ENCODE measurements at regions of chrX and their contacts with region 1.

Region 1: DNA sequence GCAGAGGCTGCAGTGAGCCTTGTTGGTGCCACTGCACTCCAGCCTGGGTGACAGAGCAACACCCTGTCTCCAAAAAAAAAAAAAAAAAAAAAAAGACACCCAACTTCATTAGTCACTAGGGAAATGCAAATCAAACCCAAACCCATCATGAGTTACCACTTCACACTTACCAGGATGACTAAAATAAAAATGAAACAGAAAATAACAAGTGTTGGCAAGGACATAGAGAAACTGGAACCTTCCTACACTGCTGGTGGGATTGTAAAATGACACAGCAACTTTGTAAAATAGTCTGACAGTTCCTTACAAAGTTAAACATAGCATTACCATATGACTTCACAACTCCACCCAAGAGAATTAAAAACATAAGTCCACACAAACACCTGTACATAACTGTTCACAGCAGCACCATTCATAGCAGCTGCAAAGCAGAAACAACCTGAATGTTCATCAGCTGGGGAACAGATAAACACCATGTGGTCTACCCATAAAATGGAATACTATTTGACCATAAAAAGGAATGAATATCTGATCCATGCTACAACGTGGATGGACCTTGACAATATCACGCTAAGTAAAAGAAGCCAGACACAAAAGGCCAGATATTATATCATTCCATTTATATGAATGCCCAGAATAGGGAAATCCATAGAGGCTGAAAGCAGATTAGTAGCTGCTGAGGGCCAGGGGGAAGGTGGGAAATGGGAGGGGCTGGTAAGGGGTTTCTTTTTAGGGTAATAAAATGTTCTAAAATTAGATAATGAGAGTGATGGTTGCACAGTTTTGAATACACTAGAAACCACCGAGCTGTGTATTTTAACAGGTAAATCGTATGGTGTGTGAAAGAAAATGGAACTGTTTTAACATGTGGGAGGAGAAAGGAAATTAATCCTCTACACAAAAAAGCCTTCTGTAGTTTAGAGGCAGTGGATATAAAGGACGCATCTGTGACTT is 18.3 kb downstream of the CD99L2 start:
- DNase-seq: no peak
- H3K4me3 ChIP-seq: no peak overlapping the region
- H3K27ac ChIP-seq: no peak overlapping the region
- H3K4me1 ChIP-seq: no peaks in the 10 kb centered on the region
- H3K27me3 ChIP-seq: no peaks in the 10 kb centered on the region
- CTCF ChIP-seq: no peak

Region 2: DNA sequence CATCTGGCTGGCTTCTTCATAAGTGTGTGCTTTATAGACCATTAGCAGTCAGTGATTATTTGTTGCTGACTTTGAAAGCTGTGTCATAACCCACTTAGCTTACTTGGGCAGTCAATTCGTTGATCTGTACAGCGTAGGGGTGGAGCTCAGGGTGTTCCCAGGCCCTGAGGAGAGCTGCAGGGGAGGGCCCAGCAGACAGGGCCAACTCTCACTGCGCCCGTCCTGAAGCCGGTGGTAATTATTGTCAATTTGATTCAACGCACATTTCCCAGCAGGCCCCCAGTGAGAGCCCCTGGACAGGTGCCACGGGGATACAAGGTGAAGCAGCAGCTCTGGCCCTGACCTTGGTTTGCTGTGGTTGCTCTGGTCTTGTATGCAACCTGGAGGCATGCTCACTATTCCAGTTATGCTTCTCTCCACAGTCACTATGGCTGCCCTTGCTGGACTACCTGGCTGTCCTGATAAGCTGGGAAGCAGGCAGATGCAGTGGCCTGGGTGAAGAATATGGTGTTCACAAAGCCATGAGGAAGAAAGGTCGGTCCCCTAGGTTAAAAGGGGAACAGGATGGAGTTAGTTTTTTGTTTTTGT is 63.0 kb after region 1 on chrX:
- CTCF ChIA-PET with region 1: no interaction called
- POLR2A ChIA-PET with region 1: no interaction called
- intact Hi-C with region 1: loop called (anchors 10 kb)
- DNase-seq: no peak
- H3K4me3 ChIP-seq: no peak overlapping the region
- H3K27ac ChIP-seq: no peak overlapping the region
- H3K4me1 ChIP-seq: no peaks in the 10 kb centered on the region
- H3K27me3 ChIP-seq: no peaks in the 10 kb centered on the region
- CTCF ChIP-seq: no peak

Region 3: DNA sequence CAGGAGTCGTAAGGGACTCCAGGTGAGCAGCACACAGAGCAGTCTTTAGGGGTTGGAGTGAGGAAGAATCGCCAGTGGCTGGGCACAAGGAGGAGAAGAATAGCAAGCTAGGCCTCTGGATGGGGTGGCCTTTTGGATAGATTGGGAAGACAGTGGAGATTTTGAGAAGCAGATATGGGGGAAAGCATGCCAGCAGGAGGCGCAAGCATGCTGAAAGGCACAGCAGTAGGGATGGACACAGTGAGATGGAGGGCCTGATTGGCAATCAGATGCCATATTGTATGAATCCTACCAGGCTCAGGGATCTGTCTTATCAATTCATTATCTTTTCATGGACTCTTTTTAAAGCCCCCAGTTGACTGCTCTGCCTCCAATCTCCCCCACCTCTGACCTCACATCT is 972.2 kb after region 1 on chrX:
- CTCF ChIA-PET with region 1: no interaction called
- POLR2A ChIA-PET with region 1: no interaction called
- intact Hi-C with region 1: no loop called
- DNase-seq: no peak
- H3K4me3 ChIP-seq: no peak overlapping the region
- H3K27ac ChIP-seq: no peak overlapping the region
- H3K4me1 ChIP-seq: no peaks in the 10 kb centered on the region
- H3K27me3 ChIP-seq: no peaks in the 10 kb centered on the region
- CTCF ChIP-seq: 0 out of 2 replicates have a peak, but pooled peaks have one; percentile 18

Measured in A673 (cell line).